AG04450 (cell line): ENCODE measurements at regions of chr1 and their contacts with region 1.

Region 1: DNA sequence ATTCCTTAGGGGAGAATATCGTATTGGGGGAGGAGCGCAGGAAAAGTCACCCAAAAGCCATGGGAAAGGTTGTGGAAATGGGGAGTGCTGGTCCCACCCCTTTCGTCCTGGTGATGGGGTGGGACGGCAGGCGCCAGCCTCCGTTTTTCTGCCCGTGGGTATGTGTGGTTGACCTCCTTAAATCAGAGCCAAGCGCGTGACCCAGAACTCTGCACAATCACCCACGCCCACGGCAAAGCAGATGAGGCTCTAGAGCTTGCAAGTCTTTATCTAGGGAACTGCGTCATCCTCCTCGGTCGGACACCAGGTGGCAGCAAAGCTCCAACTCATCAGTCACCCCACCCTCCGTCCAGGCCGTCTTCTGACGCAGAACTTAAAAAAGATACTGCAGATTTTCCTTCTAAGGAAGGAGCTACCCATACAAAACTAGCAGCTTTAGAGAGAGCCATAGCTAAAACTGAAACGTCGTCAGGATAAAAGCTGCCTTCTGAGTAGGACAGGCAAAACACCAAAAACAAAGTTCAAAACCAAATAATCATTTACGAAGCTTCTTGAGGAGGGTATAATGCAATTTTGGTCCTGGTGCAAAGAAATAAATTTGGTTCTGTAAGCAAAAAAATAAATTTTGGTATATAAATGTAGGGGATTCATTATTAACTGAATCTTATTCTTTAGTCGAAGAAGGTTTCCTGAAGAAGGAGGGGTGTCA is 62.0 kb downstream of the TBX19 start:
- DNase-seq: peak; percentile 80
- H3K4me3 ChIP-seq: peak overlapping the region; percentile 27; the same call in 1 of the 2 replicates
- H3K27ac ChIP-seq: no peak overlapping the region
- H3K27me3 ChIP-seq: no peaks in the 10 kb centered on the region
- CTCF ChIP-seq: peak; percentile 75

Region 2: GRCh38 chr1:168285419-168285790 is 57.3 kb before region 1 on chr1:
- CTCF ChIA-PET with region 1: interaction called, 14 read pairs
- POLR2A ChIA-PET with region 1: interaction called, 4 read pairs
- DNase-seq: no peak
- H3K4me3 ChIP-seq: no peak overlapping the region
- H3K27ac ChIP-seq: no peak overlapping the region
- H3K27me3 ChIP-seq: no peaks in the 10 kb centered on the region
- CTCF ChIP-seq: no peak

Region 3: DNA sequence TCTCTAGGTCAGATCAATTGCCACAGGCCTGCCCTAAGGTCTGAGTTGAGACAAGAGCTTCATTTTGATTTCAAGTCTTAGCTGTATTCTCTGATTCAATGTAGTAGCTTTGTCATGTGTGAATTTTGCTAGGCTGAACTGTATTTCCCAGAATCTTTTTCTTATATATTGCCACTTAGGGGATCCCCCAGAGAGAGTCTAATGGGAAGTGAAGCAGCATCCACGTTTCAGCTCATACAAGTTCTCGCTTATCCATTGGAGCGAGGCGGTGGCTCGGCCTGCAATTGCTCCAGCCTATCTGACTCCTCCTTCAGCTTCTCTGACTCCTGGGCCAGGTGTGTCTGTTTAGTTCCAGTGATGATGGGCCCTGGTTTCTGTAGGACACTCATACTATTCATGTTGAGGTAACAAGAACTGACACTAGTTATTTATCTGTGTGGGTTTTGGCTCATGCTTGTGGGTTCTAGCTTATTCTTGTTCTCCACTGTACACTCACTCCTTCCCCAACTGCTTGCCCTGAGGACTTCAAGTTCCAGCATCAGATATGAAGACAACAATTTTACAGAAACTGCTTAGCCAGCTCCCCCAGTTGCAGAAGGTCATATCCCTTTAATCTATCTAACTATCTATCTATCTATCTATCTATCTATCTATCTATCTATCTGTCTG is 13.9 kb before region 1 on chr1:
- CTCF ChIA-PET with region 1: interaction called, 123 read pairs
- POLR2A ChIA-PET with region 1: no interaction called
- DNase-seq: no peak
- H3K4me3 ChIP-seq: no peak overlapping the region
- H3K27ac ChIP-seq: no peak overlapping the region
- H3K27me3 ChIP-seq: no peaks in the 10 kb centered on the region
- CTCF ChIP-seq: no peak

Region 4: DNA sequence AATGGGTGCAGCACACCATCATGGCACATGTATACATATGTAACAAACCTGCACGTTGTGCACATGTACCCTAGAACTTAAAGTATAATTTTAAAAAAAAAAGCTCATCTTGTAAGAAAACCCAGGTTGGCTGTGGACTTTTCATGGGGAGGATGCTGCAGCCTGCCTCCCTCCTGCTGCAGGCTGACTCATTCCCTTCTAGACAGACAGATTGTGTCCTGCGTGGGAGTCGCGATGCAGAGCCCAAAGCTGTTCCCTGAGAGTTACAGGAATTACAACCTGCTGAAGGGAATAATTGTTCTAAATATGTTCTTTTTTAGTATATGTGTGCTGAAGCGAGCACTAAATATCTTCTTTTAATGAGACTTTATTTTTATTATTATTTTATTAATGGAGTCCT is 31.1 kb after region 1 on chr1:
- CTCF ChIA-PET with region 1: interaction called, 16 read pairs
- POLR2A ChIA-PET with region 1: no interaction called
- DNase-seq: no peak
- H3K4me3 ChIP-seq: no peak overlapping the region
- H3K27ac ChIP-seq: no peak overlapping the region
- H3K27me3 ChIP-seq: no peaks in the 10 kb centered on the region
- CTCF ChIP-seq: no peak

Region 5: DNA sequence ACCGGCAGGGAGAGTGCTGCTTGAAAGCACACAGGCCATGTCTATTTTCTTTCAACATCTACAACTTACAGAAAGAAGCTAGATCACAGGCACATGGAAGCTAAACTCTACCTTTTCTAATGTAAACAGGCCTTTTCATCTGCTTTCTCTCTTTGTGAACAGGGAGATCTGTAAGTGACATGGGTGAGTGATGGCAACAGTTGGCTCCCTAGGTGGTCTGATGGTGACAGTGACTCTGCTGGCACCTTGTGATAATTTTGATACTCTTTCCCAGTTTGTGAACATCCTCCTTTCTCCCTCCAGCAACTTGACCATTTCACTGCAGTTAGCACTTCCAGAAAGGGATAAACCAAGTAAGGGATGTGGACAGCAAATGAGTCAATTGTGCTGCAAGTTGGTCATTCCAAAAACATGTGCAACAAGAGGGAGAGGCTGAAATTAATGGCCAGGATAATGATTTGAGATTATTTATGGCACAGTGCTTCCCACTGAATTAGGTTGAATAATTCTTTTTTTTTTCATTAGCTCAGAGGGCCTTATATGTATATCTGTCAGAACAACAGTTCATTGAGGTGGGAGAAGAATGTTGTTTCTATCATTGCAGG is 111.6 kb after region 1 on chr1:
- CTCF ChIA-PET with region 1: interaction called, 16 read pairs
- POLR2A ChIA-PET with region 1: no interaction called
- DNase-seq: no peak
- H3K4me3 ChIP-seq: no peak overlapping the region
- H3K27ac ChIP-seq: no peak overlapping the region
- H3K27me3 ChIP-seq: no peaks in the 10 kb centered on the region
- CTCF ChIP-seq: no peak